ENCODE measurements at regions of chr11 and their contacts with region 1.

Region 1: DNA sequence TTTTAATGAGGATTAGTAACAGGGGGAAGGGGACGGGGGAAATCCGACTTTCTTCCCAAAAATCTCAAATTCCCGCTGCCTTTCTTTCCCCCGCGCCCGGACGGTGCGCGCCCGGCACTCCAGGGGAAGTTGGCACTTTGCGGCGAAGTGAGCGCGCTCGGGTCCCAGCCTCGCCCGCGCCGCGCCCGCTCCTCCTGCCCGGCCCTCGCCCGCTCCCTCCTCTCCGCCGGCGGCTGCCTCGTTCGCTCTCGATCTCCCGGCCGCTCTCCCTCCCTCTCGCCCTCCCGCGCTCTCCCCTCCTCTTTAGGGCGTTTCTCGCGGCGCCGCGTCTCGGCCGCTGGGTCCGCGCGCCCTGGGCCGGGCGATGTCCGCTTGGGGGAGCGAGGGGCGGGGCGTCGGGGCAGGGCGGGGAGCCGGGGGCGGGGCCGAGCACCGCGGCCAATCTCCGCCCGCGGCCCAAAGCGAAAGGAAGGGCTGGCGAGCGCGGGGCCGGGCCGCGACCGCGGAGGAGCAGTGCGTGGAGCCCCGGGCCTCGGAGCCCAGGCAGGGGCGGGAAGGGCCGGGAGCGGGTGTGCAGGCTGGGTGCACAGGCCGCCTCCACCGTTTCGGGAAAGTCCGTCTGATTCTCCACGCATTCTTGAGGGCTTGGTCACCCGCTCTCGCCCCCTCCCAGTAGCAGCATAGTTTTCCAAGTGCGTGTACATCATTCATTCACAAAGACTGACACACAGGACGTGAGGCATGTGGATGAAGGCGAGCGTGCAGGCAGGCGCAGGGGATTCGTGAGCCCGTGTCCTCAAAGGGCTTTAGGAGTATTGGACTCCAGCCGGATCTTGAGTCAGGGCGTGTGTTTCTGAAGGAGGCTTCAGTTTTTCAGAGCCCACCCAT is 65.1 kb downstream of the ETS1 start:
- DNase-seq: peak; percentile 97

Region 2: DNA sequence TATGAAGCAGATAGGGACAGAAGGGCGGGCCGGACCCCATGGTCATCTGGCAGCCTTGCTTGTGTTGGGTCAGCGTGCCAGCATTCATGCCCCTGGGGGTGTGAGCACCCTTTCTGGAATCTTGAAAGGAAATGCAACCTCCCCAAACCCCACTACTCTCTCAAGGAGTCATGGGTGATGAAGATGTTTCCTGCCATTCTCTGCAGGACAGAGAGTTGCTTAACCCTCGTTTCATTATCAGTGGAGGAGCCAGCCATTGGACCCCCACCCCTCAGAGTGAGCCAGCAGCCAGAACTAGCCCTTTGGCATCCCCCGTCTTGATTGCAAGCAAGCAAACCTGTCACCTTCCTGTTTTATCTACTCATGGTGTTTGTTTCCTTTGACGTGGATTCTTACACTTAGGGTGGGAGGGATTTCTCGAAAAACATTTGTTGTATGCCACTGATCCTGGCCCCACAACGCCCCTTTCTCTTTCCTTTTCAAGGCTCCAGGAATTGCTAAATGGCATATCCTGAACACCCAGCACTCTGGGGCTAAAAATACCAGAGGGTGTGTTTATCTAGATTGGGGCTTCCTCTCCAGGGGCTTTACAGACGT is 193.2 kb before region 1 on chr11:
- intact Hi-C with region 1: loop called (anchors 5 kb)
- DNase-seq: no peak

Region 3: DNA sequence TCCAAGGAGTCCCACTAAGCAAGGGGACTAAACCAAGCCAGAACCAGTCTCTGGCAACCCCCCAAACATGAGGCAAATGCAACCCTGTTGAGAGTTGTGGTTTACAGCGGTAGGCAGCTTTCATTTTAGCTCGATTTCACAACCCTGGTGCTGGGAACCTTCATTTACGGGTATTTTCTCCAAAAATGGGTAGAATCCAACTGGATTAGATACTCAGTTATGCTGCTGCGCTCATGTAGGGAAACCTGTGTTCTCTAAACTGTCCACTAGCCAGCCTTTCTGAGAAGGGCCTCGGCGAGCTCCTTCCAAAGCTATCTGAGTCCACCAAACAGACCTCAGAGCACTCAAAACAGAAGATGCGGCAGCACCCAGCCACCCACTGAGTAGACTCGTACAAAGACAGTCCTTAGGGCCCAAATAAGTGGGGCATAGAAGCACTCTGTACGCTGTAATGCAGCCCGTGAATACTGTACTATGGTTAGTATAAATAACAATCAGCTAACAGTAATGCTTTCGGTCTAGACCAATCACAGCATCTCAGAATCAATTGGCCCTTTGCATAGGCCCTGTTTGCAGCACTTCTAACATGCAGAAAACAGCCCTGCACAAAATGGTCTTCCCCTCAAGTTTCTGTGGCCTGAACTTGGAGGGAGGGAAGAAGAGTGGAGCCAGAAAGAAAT is 39.6 kb before region 1 on chr11:
- intact Hi-C with region 1: loop called (anchors 5 kb)
- DNase-seq: no peak

Region 4: DNA sequence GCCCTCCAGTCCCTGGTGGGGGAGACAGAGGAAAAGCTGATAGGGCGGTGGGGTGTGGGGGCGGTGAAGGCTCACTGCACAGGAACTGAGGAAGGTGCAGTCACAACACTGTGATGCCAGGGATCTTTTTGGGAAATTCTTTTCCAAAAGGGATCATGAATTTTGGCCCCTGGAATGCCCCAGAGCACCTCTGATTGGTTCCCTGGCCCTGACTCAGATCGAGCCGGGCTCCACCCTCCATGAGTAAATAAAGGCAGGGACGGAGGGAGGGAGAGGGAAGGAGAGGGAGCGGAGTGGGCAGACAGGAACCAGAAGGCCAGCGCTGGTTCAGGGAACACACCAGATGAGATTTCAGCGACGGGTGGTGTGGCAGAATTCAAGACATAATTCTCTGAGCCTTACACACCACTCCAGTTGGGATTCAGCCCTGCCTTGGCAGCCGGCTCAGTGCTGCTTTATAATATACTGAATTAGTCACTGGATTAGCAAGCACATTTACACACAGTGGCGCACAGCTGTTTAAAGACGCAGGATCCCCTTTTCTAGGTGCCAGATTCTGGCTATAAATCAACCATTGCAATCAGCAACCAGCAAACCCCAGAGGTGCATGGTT is 15.2 kb before region 1 on chr11:
- intact Hi-C with region 1: loop called (anchors 2 kb)
- DNase-seq: no peak

Region 5: GRCh38 chr11:128695539-128696221 is 173.4 kb after region 1 on chr11:
- intact Hi-C with region 1: loop called (anchors 10 kb)
- DNase-seq: peak; percentile 87